ENCODE measurements at regions of chr2 and their contacts with region 1.

Region 1: DNA sequence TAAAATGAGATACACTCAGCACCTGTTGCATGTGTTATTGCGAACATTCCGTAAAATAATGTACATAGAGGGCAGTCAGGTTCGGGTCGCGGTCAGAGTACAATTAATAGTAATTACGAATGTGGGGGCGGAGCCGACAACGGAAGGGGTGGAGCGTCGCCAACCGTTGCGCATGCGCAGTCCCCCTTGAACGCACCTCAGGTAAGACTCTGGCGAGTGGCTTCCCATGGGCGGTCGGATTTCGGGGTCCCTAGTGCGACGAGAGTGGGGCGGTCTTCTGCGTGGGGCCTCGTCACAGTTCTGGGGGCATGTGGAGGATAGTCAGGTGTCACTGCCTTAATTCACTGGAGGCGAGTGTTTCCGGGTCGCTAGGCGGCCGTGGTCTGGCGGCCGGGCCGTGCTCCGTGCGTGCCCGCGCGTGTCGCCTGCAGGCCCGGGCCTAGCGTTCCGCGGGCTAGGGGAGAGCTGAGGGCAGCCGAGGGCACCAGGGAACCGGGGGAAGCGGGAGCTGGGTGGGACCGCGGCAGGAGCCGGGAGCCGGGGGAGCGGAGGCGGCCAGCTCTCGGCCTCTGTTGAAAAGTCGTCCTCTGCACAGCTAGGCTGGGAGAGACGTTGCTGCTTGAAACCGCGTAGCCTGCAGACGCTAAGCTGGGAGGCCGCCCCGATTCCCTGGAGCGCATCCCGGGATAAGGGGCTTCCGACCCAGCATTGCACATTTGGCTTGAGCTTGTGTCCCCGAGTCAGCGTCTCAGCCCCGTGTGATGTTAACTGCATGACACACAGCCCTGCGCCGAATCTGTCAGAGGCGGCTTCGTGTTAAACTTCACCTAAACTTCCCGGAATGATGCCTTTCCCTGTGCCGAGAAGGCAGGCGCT is at the start of gene CEBPZOS:
- DNase-seq: peak; percentile 81 to 96 (median 91)
- ATAC-seq: peak; percentile 89
- H3K4me3 ChIP-seq: peak within 1 kb of the TSS; percentile 74 to 78
- H3K4me3 Mint-ChIP-seq: peak within 1 kb of the TSS; percentile 96
- H3K27ac ChIP-seq: peak within 1 kb of the TSS; percentile 74 to 78
- H3K27ac Mint-ChIP-seq: peak within 1 kb of the TSS; percentile 96
- H3K4me1 ChIP-seq: peaks cover 24% of the 10 kb centered on the region
- H3K4me1 Mint-ChIP-seq: peaks cover 35% of the 10 kb centered on the region
- H3K27me3 ChIP-seq: no peaks in the 10 kb centered on the region
- H3K27me3 Mint-ChIP-seq: no peaks in the 10 kb centered on the region
- CTCF ChIP-seq: no peak
- total RNA-seq, gene CEBPZOS: 17.5 to 18.2 TPM

Region 2: DNA sequence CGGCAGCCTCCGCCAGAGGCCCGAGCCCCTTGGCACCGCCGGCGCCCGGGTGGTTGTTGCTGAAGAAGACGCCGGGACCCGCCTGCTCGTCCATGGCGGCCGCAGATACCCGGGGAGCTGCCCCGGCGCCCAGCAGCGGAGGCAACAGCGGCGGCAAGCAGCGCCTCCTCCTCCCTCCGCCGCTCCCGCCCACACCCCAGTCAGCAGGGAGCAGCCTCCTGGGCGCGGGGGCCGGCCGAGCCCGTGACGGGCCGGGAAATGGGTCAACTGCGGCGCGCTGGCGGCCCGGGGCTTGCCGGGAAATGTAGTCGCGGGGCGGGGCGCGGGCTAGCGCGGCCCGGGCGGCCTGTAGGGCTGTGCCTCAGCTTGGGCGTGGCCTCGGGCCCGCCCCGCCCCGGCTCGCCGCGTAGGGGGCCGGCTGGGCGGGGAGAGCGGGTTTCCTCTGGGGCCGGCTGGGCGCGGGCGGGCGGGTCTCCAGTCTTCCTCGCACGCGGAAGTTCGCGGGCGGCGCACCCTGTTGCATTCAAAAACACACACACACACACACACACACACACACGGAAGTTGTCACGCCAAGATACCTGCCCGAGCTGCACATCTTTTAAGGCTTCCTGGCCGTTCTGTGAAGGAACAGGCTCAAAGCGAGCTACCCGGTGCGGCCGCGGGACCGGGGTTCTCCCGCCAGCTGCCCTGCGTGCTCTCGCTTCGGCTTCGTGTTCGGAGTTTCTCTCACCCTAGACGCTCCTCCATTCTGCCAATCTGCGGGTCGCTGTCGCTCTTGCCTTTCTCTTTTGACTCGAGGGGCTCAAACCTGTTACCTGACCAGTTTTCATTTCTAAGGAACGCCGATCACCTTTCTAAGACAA is 230.0 kb before region 1 on chr2 and contains the start of gene STRN:
- CTCF ChIA-PET with region 1: no interaction called
- POLR2A ChIA-PET with region 1: interaction called, 3 read pairs
- intact Hi-C with region 1: loop called in 1 of 2 experiments (anchors 1 kb)
- DNase-seq: peak; percentile 94 to 99 (median 98)
- ATAC-seq: peak; percentile 91
- H3K4me3 ChIP-seq: peak within 1 kb of the TSS; percentile 69 to 96
- H3K4me3 Mint-ChIP-seq: peak within 1 kb of the TSS; percentile 98
- H3K27ac ChIP-seq: peak within 1 kb of the TSS; percentile 76 to 97
- H3K27ac Mint-ChIP-seq: peak within 1 kb of the TSS; percentile 99
- H3K4me1 ChIP-seq: peaks cover 19% of the 10 kb centered on the region
- H3K4me1 Mint-ChIP-seq: peaks cover 50% of the 10 kb centered on the region
- H3K27me3 ChIP-seq: no peaks in the 10 kb centered on the region
- H3K27me3 Mint-ChIP-seq: no peaks in the 10 kb centered on the region
- CTCF ChIP-seq: no peak
- total RNA-seq, gene STRN: 15.6 to 17.4 TPM

Region 3: DNA sequence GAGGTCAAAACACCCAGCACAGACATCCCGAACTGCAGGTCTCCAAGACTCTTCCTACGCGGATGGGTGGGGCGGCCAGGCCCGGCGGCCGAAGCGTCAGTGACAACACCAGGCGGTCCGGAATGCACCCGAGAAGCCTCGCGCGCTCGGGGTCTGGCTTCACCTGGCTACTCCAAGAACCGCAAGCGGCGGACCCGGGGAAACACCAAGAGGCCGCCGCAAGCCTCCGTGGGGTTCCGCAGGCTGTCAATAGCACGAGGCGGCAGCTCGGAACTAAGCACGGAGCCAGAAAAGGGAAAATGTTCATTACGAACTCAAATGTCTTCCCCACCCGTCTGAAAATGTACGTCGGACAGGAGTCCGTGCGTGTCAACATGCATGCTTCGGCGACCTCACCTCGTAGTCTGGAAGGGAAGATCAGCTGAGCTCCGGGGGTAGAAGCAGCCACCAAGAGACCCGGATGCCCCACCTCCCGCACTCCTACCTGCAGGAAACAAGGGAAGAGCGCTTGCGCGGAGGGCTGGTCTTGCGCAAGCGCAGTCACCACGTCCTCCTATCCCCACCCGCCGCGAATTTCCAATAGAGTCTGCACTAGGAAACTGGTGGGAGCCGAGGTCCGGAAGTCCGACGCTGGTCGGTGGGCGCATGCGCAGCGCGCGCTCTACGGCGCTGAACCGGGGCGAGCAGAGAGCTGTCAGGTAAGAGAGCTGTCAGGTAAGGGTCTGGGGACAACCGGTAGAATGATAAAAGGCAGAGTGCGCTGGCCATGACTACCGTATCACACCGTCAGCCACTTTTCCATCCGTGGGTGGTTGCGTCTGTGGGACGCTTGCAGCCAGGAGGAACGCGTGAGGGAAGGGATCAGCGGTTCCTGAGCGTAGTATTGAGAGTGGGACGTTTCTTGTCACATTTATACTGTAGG is 112.4 kb before region 1 on chr2 and contains the starts of genes GPATCH11 and HEATR5B:
- CTCF ChIA-PET with region 1: no interaction called
- POLR2A ChIA-PET with region 1: no interaction called
- intact Hi-C with region 1: loop called (anchors 1 to 10 kb)
- DNase-seq: peak; percentile 73 to 97 (median 92)
- ATAC-seq: peak; percentile 84
- H3K4me3 ChIP-seq: peak within 1 kb of the TSS; percentile 76 to 99
- H3K4me3 Mint-ChIP-seq: no peak within 1 kb of the TSS
- H3K27ac ChIP-seq: peak within 1 kb of the TSS; percentile 67 to 85
- H3K27ac Mint-ChIP-seq: peak within 1 kb of the TSS; percentile 14
- H3K4me1 ChIP-seq: peaks cover 51% of the 10 kb centered on the region
- H3K4me1 Mint-ChIP-seq: peaks cover 50% of the 10 kb centered on the region
- H3K27me3 ChIP-seq: no peaks in the 10 kb centered on the region
- H3K27me3 Mint-ChIP-seq: no peaks in the 10 kb centered on the region
- CTCF ChIP-seq: no peak
- total RNA-seq, gene GPATCH11: 5.4 to 6.4 TPM
- total RNA-seq, gene HEATR5B: 9.9 to 11.0 TPM

Region 4: DNA sequence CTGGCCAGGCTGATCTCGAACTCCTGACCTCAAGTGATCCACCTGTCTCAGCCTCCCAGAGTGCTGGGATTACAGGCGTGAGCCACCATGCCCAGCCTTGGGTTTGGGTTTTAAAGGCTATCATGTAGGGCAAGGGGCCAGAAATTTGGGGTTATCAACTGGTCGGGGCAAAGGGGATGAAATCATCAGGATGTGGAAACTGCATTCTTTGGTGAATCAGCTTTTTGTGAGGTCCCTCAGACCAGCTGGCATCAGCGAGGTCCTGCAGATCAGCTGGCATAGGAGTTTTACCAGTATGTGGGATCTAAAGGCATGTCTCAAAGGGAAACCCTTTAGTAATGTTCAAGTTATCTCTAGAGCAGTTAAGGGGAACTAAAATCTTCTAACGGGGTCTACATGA is 1575.1 kb after region 1 on chr2:
- CTCF ChIA-PET with region 1: no interaction called
- POLR2A ChIA-PET with region 1: no interaction called
- intact Hi-C with region 1: loop called in 1 of 2 experiments (anchors 10 kb)
- DNase-seq: no peak
- ATAC-seq: no peak
- H3K4me3 ChIP-seq: no peak overlapping the region
- H3K4me3 Mint-ChIP-seq: no peak overlapping the region
- H3K27ac ChIP-seq: no peak overlapping the region
- H3K27ac Mint-ChIP-seq: no peak overlapping the region
- H3K4me1 ChIP-seq: no peaks in the 10 kb centered on the region
- H3K4me1 Mint-ChIP-seq: no peaks in the 10 kb centered on the region
- H3K27me3 ChIP-seq: peaks cover 0 to 3% of the 10 kb centered on the region in 2 experiments
- H3K27me3 Mint-ChIP-seq: peaks cover 6% of the 10 kb centered on the region
- CTCF ChIP-seq: no peak

Measured in CD8-positive, alpha-beta T cell (primary cell).